ENCODE measurements at regions of chr1 and their contacts with region 1.

Region 1: DNA sequence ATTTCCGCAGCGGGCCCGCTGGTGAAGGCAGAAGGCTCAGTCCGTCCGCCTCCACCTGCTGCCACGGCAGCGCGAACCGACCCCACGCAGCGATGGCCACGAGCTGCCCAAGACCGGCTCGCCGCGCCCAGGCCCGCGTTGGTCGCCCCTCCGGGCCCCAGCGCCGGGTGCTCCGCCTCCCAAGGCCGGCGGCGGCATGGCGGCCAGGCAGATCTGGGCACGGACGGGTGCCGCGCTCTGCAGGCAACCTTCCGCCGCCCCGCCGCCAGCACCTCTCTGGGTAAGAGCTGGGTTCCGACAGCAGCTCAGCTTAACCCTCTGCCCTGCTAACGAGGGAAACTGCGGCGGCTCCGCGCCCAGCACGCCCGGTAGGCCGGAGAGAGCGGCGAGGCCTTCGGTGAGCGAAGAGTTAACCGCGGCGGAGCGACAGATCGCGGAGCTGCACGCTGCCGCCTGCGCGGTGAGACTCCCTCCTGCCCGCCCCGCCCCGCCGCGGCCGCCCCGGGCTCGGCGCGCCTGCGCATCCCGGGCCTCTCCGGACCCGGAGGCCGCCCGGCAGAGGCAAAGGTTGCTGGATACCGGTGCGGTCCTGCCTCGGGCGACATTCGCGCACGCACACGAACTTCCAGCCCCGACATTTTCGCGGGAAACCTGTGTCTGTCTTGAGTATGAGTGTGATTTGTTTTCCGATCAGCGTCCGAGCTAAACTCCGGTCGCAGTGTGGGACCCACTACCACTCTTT is at the start of gene C1orf53:
- DNase-seq: peak; percentile 87 to 93
- ATAC-seq: peak; percentile 99 to 100 (median 99)
- H3K4me3 ChIP-seq: peak within 1 kb of the TSS; percentile 90
- H3K27ac ChIP-seq: peak within 1 kb of the TSS; percentile 94
- H3K4me1 ChIP-seq: peaks cover 9% of the 10 kb centered on the region
- H3K27me3 ChIP-seq: peaks cover 0 to 9% (median under 1%) of the 10 kb centered on the region in 3 donors
- CTCF ChIP-seq: peak; percentile 16
- total RNA-seq, gene C1orf53: 0.84 to 3.9 (median 1.8) TPM

Region 2: GRCh38 chr1:197774466-197775281 is 128.0 kb before region 1 on chr1:
- intact Hi-C with region 1: loop called in 1 of 2 experiments (anchors 5 kb)
- DNase-seq: peak; percentile 57 to 78
- ATAC-seq: peak; percentile 68 to 74 (median 70)
- H3K4me3 ChIP-seq: peak overlapping the region; percentile 88
- H3K27ac ChIP-seq: peak overlapping the region; percentile 88
- H3K4me1 ChIP-seq: peaks cover 31% of the 10 kb centered on the region
- H3K27me3 ChIP-seq: no peaks in the 10 kb centered on the region
- CTCF ChIP-seq: no peak

Region 3: DNA sequence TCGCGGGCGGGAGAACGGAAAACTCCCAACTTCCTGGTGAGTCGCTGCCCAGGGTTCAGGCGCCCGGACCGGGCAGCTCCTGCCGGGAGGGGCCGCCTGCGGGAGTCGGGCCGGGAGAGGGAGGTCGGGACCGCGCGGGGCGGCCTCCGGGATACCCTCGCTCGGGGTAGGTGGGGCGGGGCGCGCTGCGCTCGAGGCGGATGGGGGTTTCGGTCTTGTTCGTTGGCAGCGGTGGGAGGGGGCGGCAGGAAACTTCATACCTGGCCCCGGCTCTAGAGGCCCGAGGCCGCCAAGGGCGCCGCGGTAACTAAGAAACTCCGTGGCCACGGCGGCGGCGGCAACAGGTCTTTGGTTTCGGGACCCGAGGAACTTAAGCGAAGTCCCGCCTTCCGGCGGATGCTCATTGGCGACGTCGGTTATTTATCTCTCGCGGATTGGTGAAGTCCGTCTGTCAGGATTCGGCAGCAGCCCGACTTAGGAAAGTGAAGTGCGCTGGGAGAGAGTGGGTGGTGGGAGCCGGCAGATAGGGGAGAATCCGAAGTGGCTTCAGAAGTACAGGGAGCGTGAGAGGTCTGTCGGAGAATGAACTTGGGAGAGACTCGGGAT is 254.7 kb after region 1 on chr1:
- intact Hi-C with region 1: loop called in 1 of 2 experiments (anchors 10 kb)
- DNase-seq: peak; percentile 84 to 91
- ATAC-seq: peak; percentile 65 to 75 (median 67)
- H3K4me3 ChIP-seq: peak overlapping the region; percentile 83
- H3K27ac ChIP-seq: peak overlapping the region; percentile 94
- H3K4me1 ChIP-seq: peaks cover 55% of the 10 kb centered on the region
- H3K27me3 ChIP-seq: no peaks in the 10 kb centered on the region
- CTCF ChIP-seq: no peak

Measured in psoas muscle (tissue), 8 donors.